AG04449 (cell line): ENCODE measurements at regions of chr17 and their contacts with region 1.

Region 1: DNA sequence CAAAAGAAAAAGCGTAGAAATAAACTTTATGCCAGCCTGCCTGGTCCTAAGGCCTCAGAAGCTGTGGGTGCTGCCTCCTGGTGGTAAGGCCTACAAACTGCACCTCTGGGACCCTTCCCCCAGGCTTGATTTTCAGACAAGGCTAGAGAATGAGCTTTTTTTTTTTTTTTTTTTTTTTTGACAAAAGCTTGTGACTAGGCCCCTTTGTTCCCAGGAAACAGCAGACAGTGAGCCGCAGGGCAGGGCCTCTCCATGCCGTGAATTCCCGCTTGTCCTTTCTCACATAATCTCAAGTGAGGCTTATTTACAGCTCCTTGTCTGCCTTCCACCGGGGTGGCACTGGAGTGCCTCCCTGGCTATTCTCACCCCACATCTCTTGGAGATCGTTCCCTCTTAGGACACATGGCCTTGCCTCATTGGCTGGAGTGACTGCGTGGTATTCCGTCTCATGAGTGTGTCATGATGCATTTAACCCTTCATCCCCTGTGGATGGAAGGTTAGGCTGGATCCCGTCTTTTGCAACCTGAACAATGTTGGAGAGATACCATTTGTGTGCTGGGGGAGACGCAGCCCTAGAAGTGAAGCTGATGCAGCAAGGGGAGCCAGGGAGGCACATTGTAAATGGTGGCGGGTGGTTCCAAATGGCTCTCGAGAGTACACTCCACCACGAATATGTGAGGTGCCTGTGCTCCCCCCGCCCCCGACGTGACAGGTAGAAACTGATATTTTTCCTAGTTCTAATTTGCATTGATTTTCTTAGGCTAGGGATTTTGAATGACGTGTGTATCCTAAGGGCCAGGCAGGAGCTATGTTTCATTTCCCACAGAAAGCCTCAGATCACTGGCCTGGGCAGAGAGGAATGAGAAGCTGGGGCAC is 49.6 kb downstream of the USP22 start:
- DNase-seq: peak; percentile 12
- H3K4me3 ChIP-seq: no peak overlapping the region
- CTCF ChIP-seq: peak; percentile 89

Region 2: GRCh38 chr17:20800146-20800545 is 193.1 kb before region 1 on chr17:
- CTCF ChIA-PET with region 1: interaction called, 52 read pairs
- POLR2A ChIA-PET with region 1: no interaction called
- DNase-seq: no peak
- H3K4me3 ChIP-seq: no peak overlapping the region
- CTCF ChIP-seq: no peak

Region 3: DNA sequence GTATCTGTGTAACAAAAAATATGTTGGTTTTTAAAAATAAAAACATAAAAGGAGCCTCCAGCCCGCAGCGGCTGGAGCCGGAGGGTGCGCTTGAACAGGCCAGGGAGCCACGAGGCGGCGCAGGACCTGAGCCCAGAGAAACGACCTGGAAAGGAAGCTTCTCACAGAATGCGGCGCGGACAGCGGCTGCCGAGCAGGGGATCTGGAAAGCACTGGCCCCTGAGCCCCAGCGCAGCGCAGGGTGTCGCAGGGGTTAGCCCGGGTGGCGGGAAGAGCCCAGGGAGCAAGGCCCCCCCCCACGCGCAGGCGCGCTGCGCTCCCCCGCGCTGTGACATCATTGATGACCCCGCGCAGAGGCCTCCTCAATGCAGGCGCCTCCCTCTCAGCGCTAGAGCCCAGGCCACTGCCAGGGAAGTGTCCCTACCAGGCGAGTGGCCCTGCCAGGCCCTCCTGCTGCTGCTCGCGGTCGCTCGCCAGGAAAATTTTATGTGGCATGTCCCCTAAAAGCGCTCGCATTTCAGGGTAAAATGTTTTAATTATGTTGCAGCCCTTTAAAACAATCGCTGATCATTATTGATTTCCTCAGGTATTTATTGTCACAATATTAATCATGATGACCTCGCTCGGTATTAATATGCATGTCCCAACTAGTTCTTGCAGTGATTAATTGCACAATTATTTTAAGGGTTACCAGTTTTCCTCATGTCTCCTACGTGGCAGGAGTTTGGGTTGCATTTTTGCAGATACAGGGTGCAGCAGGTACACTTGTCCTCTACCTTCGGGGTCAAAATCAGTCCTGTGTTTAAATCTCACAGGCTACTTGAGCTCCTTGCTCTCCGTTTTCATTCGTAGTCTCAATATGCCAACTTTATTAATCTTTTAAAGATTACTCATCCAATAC is 84.6 kb before region 1 on chr17:
- CTCF ChIA-PET with region 1: interaction called, 26 read pairs
- POLR2A ChIA-PET with region 1: no interaction called
- DNase-seq: no peak
- H3K4me3 ChIP-seq: peak overlapping the region; percentile 63
- CTCF ChIP-seq: peak; percentile 78